ENCODE measurements at regions of chr2 and their contacts with region 1.

Region 1: GRCh38 chr2:216752855-216753505 is 57.6 kb upstream of the IGFBP5 start:
- DNase-seq: no peak
- H3K4me3 ChIP-seq: no peak overlapping the region
- H3K27ac ChIP-seq: no peak overlapping the region
- H3K4me1 ChIP-seq: no peaks in the 10 kb centered on the region
- H3K27me3 ChIP-seq: no peaks in the 10 kb centered on the region
- CTCF ChIP-seq: no peak
- EP300 ChIP-seq: no peak
- POLR2A ChIP-seq: no peak
- RAD21 ChIP-seq: no peak

Region 2: GRCh38 chr2:216474925-216475670 is 277.9 kb before region 1 on chr2:
- CTCF ChIA-PET with region 1: no interaction called
- POLR2A ChIA-PET with region 1: no interaction called
- DNase-seq: no peak
- H3K4me3 ChIP-seq: no peak overlapping the region
- H3K27ac ChIP-seq: no peak overlapping the region
- H3K4me1 ChIP-seq: no peaks in the 10 kb centered on the region
- H3K27me3 ChIP-seq: no peaks in the 10 kb centered on the region
- CTCF ChIP-seq: no peak
- EP300 ChIP-seq: no peak
- POLR2A ChIP-seq: no peak
- RAD21 ChIP-seq: no peak

Region 3: DNA sequence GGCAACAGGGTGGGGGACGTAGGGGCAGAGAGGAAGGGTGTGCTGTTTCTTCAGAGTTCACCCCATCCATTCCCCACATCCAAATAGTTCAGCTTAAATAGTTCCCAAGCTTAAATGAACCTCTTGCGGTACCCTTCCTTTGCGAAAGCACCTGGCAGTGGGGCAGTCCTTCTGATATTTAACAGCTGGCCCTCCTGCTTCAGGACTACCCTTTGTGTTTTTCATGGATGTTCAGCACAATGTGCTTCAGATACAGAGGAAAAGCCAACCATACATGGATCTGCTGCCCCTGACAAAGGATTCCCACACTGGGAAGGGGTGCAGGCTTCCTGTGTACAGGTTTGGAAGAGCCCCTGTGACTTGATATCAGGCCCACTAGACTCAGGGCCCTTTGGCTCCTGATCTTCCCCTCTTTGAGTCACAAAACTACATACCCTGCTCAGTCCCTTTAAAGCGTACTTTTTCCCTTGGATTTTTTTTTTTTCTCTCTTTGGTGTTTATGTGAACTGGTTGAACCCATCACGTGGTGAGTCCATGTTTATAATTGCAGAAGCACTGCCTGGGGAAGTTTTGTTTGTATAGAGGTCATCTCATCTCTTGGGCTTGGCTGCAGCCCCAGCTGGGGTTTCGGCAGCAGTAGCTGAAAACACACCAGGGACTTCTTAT is 12.3 kb before region 1 on chr2:
- CTCF ChIA-PET with region 1: interaction called, 54 read pairs
- POLR2A ChIA-PET with region 1: no interaction called
- DNase-seq: no peak
- H3K4me3 ChIP-seq: no peak overlapping the region
- H3K27ac ChIP-seq: no peak overlapping the region
- H3K4me1 ChIP-seq: peaks cover 0 to 10% (median 1%) of the 10 kb centered on the region in 4 experiments; a peak in 3 of 7 replicates
- H3K27me3 ChIP-seq: no peaks in the 10 kb centered on the region
- CTCF ChIP-seq: no peak
- EP300 ChIP-seq: no peak
- POLR2A ChIP-seq: no peak
- RAD21 ChIP-seq: no peak

Region 4: DNA sequence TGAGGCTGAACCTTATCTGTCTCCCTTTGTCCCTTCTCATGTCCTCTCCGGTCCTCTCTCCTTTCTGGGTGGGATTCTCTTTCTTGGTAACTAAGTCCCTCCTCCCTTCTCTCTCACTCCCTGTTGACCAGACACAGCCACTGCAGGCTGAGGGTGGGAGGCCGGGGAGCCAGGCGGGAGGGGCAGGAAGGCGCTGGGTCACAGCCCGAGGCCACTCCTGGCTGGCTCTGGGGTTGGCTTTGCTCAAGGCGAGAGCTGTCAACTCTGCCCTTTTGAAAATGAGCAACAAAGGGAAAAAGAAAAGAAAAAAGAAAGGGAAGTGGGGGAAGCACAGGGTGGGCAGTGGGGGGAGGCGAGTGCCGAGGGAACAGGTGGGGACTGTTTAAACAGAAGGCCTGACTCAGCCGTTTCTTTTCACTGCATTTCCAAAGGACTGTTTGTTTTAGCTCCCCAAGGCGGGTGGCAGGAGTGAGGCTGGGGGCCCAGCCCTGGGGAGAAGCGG is 12.8 kb after region 1 on chr2:
- CTCF ChIA-PET with region 1: interaction called, 13 read pairs
- POLR2A ChIA-PET with region 1: no interaction called
- DNase-seq: peak; percentile 75 to 78
- H3K4me3 ChIP-seq: peak overlapping the region in 1 of 4 experiments; percentile 19; a peak in 2 of 8 replicates
- H3K27ac ChIP-seq: no peak overlapping the region; the same call in 1 of the 2 replicates
- H3K4me1 ChIP-seq: peaks cover 4 to 17% (median 8%) of the 10 kb centered on the region in 4 experiments
- H3K27me3 ChIP-seq: no peaks in the 10 kb centered on the region; a peak in 1 of 7 replicates
- CTCF ChIP-seq: peak; percentile 17 to 34 (median 18); a peak in 3 of 4 replicates
- EP300 ChIP-seq: peak in 1 of 2 experiments; percentile 56; a peak in 1 of 3 replicates
- POLR2A ChIP-seq: no peak
- RAD21 ChIP-seq: peak in 1 of 2 experiments; percentile 35; a peak in 2 of 4 replicates

Region 5: DNA sequence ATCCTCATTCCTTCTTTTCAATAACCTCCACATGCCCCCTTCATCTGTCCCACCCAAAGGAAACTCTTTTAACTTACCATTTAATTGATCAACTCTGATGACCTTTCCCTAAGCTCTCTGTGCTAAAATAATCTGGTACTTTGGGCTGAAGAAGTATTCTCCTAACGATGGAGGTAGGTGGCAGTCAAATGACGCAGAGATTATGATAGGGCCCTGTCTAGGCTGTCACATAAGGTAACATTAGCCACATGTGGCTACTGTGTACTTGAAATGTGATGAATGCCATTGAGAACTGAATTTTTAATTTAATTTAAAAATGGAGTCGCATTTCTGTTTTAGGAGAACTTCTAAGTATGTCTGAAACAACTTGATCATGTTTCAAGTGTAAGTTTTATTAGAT is 247.4 kb after region 1 on chr2:
- CTCF ChIA-PET with region 1: no interaction called
- POLR2A ChIA-PET with region 1: no interaction called
- DNase-seq: no peak
- H3K4me3 ChIP-seq: no peak overlapping the region
- H3K27ac ChIP-seq: no peak overlapping the region
- H3K4me1 ChIP-seq: no peaks in the 10 kb centered on the region
- H3K27me3 ChIP-seq: 0 out of 7 replicates have a peak, but pooled peaks cover 0 to 2% (median 0%) of the 10 kb centered on the region in 4 experiments
- CTCF ChIP-seq: no peak
- EP300 ChIP-seq: no peak
- POLR2A ChIP-seq: no peak
- RAD21 ChIP-seq: no peak